Activated CD4-positive, alpha-beta T cell treated with anti-CD3 and anti-CD28 coated beads for 36 hours (primary cell): ENCODE measurements at regions of chr20 and their contacts with region 1.

Region 1: GRCh38 chr20:63627129-63627750 is 339 bp upstream of the GMEB2 start:
- DNase-seq: peak; percentile 97
- ATAC-seq: peak; percentile 77
- H3K4me3 Mint-ChIP-seq: peak overlapping the region; percentile 87
- H3K27ac Mint-ChIP-seq: peak overlapping the region; percentile 97
- H3K4me1 Mint-ChIP-seq: peaks cover 39% of the 10 kb centered on the region
- H3K27me3 Mint-ChIP-seq: no peaks in the 10 kb centered on the region

Region 2: GRCh38 chr20:62861726-62862336 is 765.4 kb before region 1 on chr20 and contains the start of gene TCFL5:
- CTCF ChIA-PET with region 1: no interaction called
- POLR2A ChIA-PET with region 1: no interaction called
- intact Hi-C with region 1: loop called in 1 of 2 experiments (anchors 2 kb)
- DNase-seq: peak; percentile 97
- ATAC-seq: peak; percentile 92
- H3K4me3 Mint-ChIP-seq: peak within 1 kb of the TSS; percentile 66
- H3K27ac Mint-ChIP-seq: peak within 1 kb of the TSS; percentile 42
- H3K4me1 Mint-ChIP-seq: peaks cover 28% of the 10 kb centered on the region
- H3K27me3 Mint-ChIP-seq: no peaks in the 10 kb centered on the region
- total RNA-seq, gene TCFL5: 5.2 to 6.6 TPM

Region 3: DNA sequence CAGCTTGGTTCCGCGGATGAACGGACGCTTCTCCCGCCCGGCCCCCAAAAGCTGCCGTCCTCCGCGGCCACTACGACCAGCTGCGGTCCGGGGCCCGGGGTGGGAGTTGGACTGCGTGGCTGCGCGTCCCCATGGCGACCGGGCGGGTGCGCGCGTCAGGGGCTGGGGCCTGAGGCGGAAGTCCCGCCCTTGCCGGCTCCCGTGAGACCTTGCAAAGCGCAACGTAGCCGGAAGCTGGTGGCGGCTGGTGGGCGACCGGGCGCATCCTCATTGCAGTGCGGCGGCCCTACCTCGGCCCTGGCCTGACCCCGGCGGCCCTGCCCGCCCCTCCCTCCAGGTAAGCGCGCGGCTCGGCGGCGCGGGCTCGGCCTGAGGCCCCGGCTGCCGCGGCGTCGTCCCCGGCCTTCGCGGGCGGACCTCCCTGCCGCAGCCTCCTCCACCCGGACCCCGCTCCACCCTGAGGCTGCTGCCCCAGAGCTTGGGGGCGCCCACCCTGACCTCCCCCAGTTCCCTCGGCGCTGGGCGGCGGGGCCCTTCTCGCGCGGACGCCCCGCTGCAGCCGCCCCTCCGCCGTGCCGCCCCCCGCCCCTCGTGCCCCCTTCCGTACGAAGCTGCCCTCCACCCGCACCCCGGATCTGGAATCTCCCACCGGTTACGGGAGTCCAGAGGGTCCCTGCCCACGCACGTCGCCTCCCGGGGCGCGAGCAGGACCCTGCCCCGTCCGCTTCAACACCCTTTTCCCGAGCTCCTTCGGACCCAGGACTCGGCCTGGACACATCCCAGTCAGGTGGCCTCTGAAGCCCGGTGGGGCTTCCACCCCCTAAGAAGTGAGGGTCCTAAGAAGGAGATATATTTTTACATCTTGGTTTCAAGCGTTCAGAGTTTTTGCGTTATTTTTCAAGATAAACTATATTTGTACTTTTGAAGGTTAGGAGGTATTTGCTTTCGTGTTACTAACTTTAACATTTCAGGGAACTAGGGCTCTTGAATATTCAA is 354.4 kb before region 1 on chr20 and contains the start of gene ARFGAP1:
- CTCF ChIA-PET with region 1: no interaction called
- POLR2A ChIA-PET with region 1: no interaction called
- intact Hi-C with region 1: loop called in 1 of 2 experiments (anchors 2 kb)
- DNase-seq: peak; percentile 94
- ATAC-seq: peak; percentile 99
- H3K4me3 Mint-ChIP-seq: peak within 1 kb of the TSS; percentile 79
- H3K27ac Mint-ChIP-seq: peak within 1 kb of the TSS; percentile 83
- H3K4me1 Mint-ChIP-seq: peaks cover 27% of the 10 kb centered on the region
- H3K27me3 Mint-ChIP-seq: no peaks in the 10 kb centered on the region
- total RNA-seq, gene ARFGAP1: 73.4 to 77.6 TPM

Region 4: GRCh38 chr20:63580796-63581461 is 46.3 kb before region 1 on chr20:
- CTCF ChIA-PET with region 1: no interaction called
- POLR2A ChIA-PET with region 1: no interaction called
- intact Hi-C with region 1: loop called in 1 of 2 experiments (anchors 5 kb)
- DNase-seq: peak; percentile 88
- ATAC-seq: peak; percentile 100
- H3K4me3 Mint-ChIP-seq: no peak overlapping the region
- H3K27ac Mint-ChIP-seq: no peak overlapping the region
- H3K4me1 Mint-ChIP-seq: peaks cover 4% of the 10 kb centered on the region
- H3K27me3 Mint-ChIP-seq: peaks cover 2% of the 10 kb centered on the region

Region 5: DNA sequence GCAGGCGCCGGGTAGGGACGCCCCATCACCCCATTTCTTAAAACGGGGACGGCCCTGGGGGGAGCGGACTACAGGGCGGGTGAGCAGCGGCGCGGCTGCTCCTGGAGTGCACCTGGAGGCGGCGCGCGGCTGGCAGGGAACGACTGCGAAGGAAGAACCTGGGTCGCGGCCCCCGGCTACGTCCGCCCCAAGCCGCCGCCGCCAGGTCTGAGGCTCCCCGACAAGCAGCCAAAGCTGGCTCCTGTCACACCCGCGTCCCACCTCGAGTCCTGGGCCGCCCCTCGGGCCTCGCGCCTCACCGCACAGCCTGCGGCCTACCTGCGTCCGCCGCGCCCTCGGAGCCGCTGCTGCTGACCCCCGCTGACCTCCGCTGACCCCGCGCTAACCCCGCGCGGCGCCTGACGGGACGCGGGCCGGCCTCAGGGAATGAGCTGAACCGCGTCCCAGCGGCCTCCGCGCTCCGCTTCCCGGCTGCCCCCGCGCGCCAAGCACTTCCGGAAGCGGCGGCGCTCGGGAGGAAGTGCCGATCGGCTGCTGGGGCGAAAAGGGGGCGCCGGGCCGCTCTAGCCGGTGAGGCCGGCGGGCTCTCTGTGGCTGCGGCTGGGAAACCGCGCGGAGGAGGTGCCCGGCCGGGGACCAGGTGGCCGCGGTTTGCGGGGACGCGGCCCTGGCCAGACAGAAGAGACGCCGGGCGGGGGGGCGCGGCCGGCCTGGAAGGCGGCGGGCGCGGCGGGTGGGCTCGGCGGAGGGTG is 80.5 kb after region 1 on chr20 and contains the starts of genes ARFRP1 and ZGPAT:
- CTCF ChIA-PET with region 1: no interaction called
- POLR2A ChIA-PET with region 1: no interaction called
- intact Hi-C with region 1: loop called in 1 of 2 experiments (anchors 1 kb)
- DNase-seq: peak; percentile 94
- ATAC-seq: peak; percentile 89
- H3K4me3 Mint-ChIP-seq: peak within 1 kb of the TSS; percentile 95
- H3K27ac Mint-ChIP-seq: peak within 1 kb of the TSS; percentile 90
- H3K4me1 Mint-ChIP-seq: peaks cover 44% of the 10 kb centered on the region
- H3K27me3 Mint-ChIP-seq: no peaks in the 10 kb centered on the region
- total RNA-seq, gene ARFRP1: 36.4 to 52.0 TPM
- total RNA-seq, gene ZGPAT: 15.3 to 21.9 TPM

Region 6: GRCh38 chr20:63955827-63956663 is 328.8 kb after region 1 on chr20 and contains the start of gene UCKL1:
- CTCF ChIA-PET with region 1: no interaction called
- POLR2A ChIA-PET with region 1: no interaction called
- intact Hi-C with region 1: loop called in 1 of 2 experiments (anchors 5 kb)
- DNase-seq: peak; percentile 95
- ATAC-seq: peak; percentile 78
- H3K4me3 Mint-ChIP-seq: peak within 1 kb of the TSS; percentile 77
- H3K27ac Mint-ChIP-seq: peak within 1 kb of the TSS; percentile 89
- H3K4me1 Mint-ChIP-seq: peaks cover 37% of the 10 kb centered on the region
- H3K27me3 Mint-ChIP-seq: no peaks in the 10 kb centered on the region
- total RNA-seq, gene UCKL1: 28.3 to 32.2 TPM

Region 7: GRCh38 chr20:64062596-64063388 is 435.6 kb after region 1 on chr20 and contains the start of gene TCEA2:
- CTCF ChIA-PET with region 1: no interaction called
- POLR2A ChIA-PET with region 1: no interaction called
- intact Hi-C with region 1: loop called in 1 of 2 experiments (anchors 1 kb)
- DNase-seq: peak; percentile 98
- ATAC-seq: peak; percentile 83
- H3K4me3 Mint-ChIP-seq: peak within 1 kb of the TSS; percentile 82
- H3K27ac Mint-ChIP-seq: peak within 1 kb of the TSS; percentile 79
- H3K4me1 Mint-ChIP-seq: peaks cover 51% of the 10 kb centered on the region
- H3K27me3 Mint-ChIP-seq: no peaks in the 10 kb centered on the region
- total RNA-seq, gene TCEA2: 40.6 to 50.0 TPM